H1 (cell line): ENCODE measurements at regions of chr17 and their contacts with region 1.

Region 1: GRCh38 chr17:67376737-67377487 is at the start of gene PITPNC1:
- DNase-seq: peak in 1 of 2 experiments; percentile 89
- H3K4me3 ChIP-seq: peak within 1 kb of the TSS; percentile 80 to 95 (median 91)
- H3K27ac ChIP-seq: peak within 1 kb of the TSS; percentile 77
- H3K4me1 ChIP-seq: peaks cover 2 to 5% (median 4%) of the 10 kb centered on the region in 4 experiments; a peak in 6 of 7 replicates
- H3K27me3 ChIP-seq: no peaks in the 10 kb centered on the region
- CTCF ChIP-seq: no peak
- EP300 ChIP-seq: no peak
- POLR2A ChIP-seq: peak; percentile 70 to 76
- RAD21 ChIP-seq: no peak
- total RNA-seq, gene PITPNC1: 53.8 and 54.7 TPM in 2 replicates

Region 2: DNA sequence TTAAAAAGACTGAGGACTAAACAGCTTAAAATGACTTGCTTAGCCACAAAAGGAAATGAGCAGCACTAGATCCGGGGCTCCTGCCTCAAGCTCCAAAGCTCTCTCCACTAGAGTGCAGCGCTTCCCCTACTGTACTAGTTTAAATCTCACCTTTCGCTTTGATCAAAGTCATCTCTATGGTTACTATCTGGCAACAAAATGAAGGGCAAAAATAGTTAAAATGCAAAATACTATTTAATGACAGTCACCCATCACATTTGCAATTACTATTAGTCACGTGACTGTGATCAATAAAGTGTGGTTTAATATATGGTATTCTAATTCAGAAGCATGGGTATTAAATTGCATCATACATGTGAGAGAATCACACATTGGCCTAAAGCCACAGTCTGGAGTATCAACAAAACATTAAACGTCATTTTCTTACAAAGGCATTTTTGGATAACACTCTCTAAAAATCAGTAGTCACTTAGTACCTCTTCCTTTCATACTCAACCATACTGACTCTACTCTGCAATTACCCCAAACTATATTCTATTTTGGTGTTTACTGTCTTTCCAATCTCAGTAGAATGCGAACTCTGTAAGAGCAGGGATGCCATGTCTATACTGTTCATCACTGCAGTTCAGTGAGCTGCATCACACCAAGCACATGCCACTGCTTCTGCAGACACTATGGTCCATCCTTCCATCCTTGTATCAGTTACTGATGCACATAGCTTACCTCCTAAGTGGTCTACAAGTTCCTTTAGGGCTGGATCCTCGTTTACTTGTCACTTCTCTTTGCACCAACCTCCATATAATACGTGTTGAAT is 16.7 kb before region 1 on chr17:
- CTCF ChIA-PET with region 1: interaction called, 17 read pairs
- POLR2A ChIA-PET with region 1: interaction called, 5 read pairs
- DNase-seq: no peak
- H3K4me3 ChIP-seq: no peak overlapping the region
- H3K27ac ChIP-seq: no peak overlapping the region
- H3K4me1 ChIP-seq: peaks cover 0 to 4% (median 1%) of the 10 kb centered on the region in 4 experiments; a peak in 3 of 7 replicates
- H3K27me3 ChIP-seq: no peaks in the 10 kb centered on the region
- CTCF ChIP-seq: peak; percentile 38 to 50 (median 38)
- EP300 ChIP-seq: no peak
- POLR2A ChIP-seq: no peak
- RAD21 ChIP-seq: peak; percentile 28 to 36; a peak in 3 of 4 replicates

Region 3: DNA sequence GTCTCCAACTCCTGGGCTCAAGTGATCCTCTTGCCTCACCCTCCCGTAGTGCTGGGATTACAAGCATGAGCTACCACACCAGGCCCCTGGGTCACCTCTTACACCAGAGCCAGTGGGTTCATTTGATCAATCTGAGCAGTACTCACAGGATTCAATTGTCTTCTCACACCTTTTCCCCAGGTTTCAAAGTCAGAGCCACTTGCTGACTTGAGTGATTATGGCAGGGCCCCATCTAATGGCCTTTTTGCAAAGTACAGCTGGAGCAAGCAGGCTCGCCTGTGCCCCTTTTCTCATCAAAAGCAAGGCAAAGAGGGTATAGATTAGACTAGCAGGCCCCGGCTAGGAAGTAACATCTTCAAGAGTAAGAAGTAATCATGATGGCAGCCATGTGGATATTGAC is 226.0 kb after region 1 on chr17:
- CTCF ChIA-PET with region 1: interaction called, 17 read pairs
- POLR2A ChIA-PET with region 1: interaction called, 3 read pairs
- DNase-seq: peak; percentile 21 to 57
- H3K4me3 ChIP-seq: no peak overlapping the region
- H3K27ac ChIP-seq: no peak overlapping the region
- H3K4me1 ChIP-seq: peaks cover 0 to 4% (median 0%) of the 10 kb centered on the region in 4 experiments; a peak in 2 of 7 replicates
- H3K27me3 ChIP-seq: no peaks in the 10 kb centered on the region
- CTCF ChIP-seq: peak; percentile 44 to 84 (median 81)
- EP300 ChIP-seq: no peak
- POLR2A ChIP-seq: no peak
- RAD21 ChIP-seq: peak; percentile 89 to 91

Region 4: DNA sequence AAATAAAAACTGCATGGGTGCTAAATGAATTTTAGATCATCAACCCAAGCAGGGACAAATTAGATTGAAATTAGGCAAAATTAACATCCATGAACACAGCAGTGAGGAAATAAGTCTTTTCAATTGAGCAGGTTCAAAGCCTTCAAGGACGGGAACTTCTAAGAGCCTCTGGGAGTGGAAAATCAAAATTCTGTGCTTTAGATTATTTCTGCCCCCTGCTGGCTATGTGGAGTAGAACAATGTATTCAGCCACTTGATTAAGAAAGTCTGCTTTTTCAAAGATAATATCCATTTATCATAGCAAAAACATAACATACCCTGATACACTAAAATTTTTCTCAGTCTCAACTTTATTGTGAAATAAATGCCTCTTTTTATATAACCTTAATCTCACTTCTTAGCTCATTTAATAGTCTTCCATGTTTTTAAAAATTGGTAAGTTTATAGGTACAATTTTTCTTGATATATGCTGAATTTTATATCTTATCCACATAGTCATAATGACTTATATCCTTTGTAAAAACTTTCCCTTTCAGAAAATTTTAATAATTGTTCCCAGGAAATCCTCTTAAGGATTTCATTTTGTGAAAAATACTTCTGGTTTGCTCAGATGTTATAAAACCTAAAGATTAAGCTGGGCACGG is 312.7 kb after region 1 on chr17:
- CTCF ChIA-PET with region 1: interaction called, 10 read pairs
- POLR2A ChIA-PET with region 1: interaction called, 3 read pairs
- DNase-seq: no peak
- H3K4me3 ChIP-seq: no peak overlapping the region
- H3K27ac ChIP-seq: no peak overlapping the region
- H3K4me1 ChIP-seq: peaks cover 0 to 3% (median 0%) of the 10 kb centered on the region in 4 experiments; a peak in 1 of 7 replicates
- H3K27me3 ChIP-seq: no peaks in the 10 kb centered on the region
- CTCF ChIP-seq: peak in 2 of 3 experiments; percentile 52 to 60; a peak in 2 of 4 replicates
- EP300 ChIP-seq: no peak
- POLR2A ChIP-seq: no peak
- RAD21 ChIP-seq: peak; percentile 52 to 60